ENCODE measurements at regions of chr1 and their contacts with region 1.

Region 1: DNA sequence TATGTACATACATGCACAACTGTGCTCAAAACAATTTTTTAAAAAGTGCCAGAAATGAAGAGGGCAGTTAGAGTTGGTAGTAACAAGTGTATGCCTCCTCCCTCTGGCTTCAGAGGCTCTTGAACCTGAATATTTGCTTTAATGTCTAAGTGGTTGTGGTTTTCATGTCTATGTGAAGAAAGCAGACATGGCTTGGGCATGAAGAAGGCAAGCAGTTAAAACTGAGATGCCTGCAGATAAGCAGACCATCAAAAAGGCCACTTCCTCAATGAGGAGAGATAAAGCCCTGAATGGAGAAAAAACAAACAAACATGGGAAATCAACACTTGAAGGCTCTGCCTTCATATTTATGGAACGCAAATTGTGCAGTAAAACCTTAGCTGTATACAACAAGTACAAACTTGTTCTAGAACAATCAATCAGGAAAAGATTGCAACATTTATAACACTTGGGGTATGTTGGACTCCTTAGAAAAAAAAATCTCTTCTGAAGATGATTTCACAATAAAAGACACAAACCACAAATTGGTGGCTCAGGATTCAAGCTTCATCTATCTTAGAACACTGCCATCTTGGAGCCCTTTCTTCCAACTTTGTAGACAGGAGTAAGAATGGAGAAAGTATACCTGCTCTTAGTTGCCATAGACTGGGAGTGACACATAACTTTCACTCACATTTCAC is 52.7 kb upstream of the PLA2G4A start:
- DNase-seq: no peak
- H3K4me3 ChIP-seq: no peak overlapping the region
- H3K27ac ChIP-seq: no peak overlapping the region
- H3K4me1 ChIP-seq: no peaks in the 10 kb centered on the region
- H3K27me3 ChIP-seq: no peaks in the 10 kb centered on the region
- CTCF ChIP-seq: no peak

Region 2: GRCh38 chr1:186498695-186499389 is 277.2 kb before region 1 on chr1:
- CTCF ChIA-PET with region 1: no interaction called
- POLR2A ChIA-PET with region 1: no interaction called
- intact Hi-C with region 1: no loop called
- DNase-seq: peak; percentile 87
- H3K4me3 ChIP-seq: no peak overlapping the region
- H3K27ac ChIP-seq: peak overlapping the region; percentile 2
- H3K4me1 ChIP-seq: peaks cover 28% of the 10 kb centered on the region
- H3K27me3 ChIP-seq: no peaks in the 10 kb centered on the region
- CTCF ChIP-seq: no peak

Region 3: DNA sequence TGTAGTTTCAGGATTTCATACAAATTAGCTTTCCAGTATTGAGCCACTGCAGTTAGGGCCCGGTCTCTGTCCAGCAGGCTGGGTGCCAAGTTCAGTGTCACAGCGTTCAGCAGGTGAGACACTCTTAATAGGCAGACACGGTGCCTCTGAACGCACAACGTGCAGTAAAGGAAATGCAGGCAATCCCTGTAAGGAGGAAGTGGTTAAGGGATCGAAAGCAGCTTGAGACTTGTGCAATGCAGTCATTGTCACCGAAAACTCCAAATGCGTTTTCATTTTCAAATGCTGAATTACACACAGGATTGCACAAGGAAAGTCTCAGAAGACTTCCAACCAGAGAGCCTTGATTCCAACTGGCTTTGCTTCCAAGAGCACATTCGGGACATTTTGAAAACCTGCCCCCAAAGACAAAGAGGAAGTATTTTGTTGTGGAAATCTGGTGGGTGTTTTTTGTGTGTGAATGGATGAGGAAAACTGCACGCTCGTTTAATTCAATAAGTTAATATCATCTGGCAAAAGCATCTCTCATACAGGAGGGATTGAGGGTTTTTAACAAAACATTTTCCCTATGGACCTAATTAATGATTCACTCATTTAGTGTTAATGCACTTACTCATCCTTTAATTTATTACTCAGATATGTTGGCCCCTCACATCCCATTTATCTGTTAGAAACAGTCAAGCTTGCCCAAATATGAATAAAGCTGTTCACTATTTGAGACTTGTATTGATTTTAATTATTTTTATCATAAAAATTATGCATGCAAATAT is 157.4 kb before region 1 on chr1:
- CTCF ChIA-PET with region 1: no interaction called
- POLR2A ChIA-PET with region 1: no interaction called
- intact Hi-C with region 1: no loop called
- DNase-seq: peak; percentile 69
- H3K4me3 ChIP-seq: peak overlapping the region; percentile 23
- H3K27ac ChIP-seq: no peak overlapping the region
- H3K4me1 ChIP-seq: peaks cover 9% of the 10 kb centered on the region
- H3K27me3 ChIP-seq: no peaks in the 10 kb centered on the region
- CTCF ChIP-seq: no peak

Region 4: GRCh38 chr1:186790101-186790500 is 14.1 kb after region 1 on chr1:
- CTCF ChIA-PET with region 1: interaction called, 10 read pairs
- POLR2A ChIA-PET with region 1: no interaction called
- intact Hi-C with region 1: no loop called
- DNase-seq: no peak
- H3K4me3 ChIP-seq: no peak overlapping the region
- H3K27ac ChIP-seq: no peak overlapping the region
- H3K4me1 ChIP-seq: no peaks in the 10 kb centered on the region
- H3K27me3 ChIP-seq: no peaks in the 10 kb centered on the region
- CTCF ChIP-seq: no peak